ENCODE measurements at regions of chr5 and their contacts with region 1.

Region 1: DNA sequence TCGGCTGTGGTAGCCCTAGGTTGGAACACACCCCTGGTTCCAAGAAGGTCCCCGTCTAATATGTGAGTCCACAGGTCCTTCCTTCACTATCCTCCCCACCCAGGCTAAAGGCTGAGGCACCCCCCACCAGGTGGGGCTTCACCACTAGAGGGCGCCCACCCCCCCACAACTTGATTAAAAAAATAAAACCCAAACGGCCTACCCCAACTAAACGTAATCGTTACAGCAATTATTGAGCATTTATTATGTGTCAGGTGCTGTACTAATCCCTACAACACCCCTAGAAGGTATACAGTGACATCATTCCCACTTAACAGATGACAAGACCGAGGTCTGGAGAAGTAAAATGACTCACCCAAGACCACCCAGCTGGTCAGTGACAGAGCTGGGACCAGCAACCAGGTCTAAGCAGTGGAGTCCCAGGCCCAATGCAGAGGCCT is 65.0 kb downstream of the FGF18 start:
- DNase-seq: no peak
- ATAC-seq: peak in 6 of 8 donors; percentile 27 to 54 (median 41)
- H3K4me3 ChIP-seq: no peak overlapping the region
- H3K27ac ChIP-seq: peak overlapping the region in 3 of 10 donors; percentile 62 to 78 (median 69)
- H3K4me1 ChIP-seq: peaks cover 0 to 16% (median 9%) of the 10 kb centered on the region in 9 donors
- H3K27me3 ChIP-seq: no peaks in the 10 kb centered on the region
- CTCF ChIP-seq: peak; percentile 46 to 79 (median 69)

Region 2: GRCh38 chr5:171427318-171428167 is 56.9 kb before region 1 on chr5:
- intact Hi-C with region 1: loop called in 3 of 10 experiments (anchors 5 to 10 kb)
- DNase-seq: peak; percentile 50 to 84
- ATAC-seq: peak; percentile 71 to 86 (median 76)
- H3K4me3 ChIP-seq: no peak overlapping the region
- H3K27ac ChIP-seq: peak overlapping the region in 5 of 10 donors; percentile 39 to 56 (median 42)
- H3K4me1 ChIP-seq: peaks cover 0 to 60% (median 10%) of the 10 kb centered on the region in 9 donors
- H3K27me3 ChIP-seq: no peaks in the 10 kb centered on the region
- CTCF ChIP-seq: no peak

Region 3: DNA sequence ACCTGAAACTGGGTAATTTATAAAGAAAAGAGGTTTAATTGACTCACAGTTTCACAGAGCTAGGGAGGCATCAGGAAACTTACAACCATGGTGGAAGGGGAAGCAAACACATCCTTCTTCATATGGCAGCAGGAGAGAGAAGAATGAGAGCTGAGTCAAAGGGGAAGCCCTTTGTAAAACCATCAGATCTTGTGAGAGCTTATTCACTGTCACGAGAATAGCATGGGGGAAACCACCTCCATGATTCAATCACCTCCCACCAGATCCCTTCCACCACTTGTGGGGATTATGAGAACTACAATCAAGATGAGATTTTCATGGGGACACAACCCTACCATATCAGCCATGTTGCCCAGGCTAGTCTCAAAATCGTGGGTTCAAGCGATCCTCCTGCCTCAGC is 78.3 kb after region 1 on chr5:
- intact Hi-C with region 1: no loop called
- DNase-seq: no peak
- ATAC-seq: no peak
- H3K4me3 ChIP-seq: no peak overlapping the region
- H3K27ac ChIP-seq: no peak overlapping the region
- H3K4me1 ChIP-seq: no peaks in the 10 kb centered on the region
- H3K27me3 ChIP-seq: no peaks in the 10 kb centered on the region
- CTCF ChIP-seq: no peak

Measured in heart right ventricle (tissue), 16 donors.